Natural killer cell (primary cell): ENCODE measurements at regions of chr1 and their contacts with region 1.

Region 1: GRCh38 chr1:96966536-96967138 is 245.1 kb downstream of the PTBP2 start:
- DNase-seq: peak; percentile 49 to 81
- ATAC-seq: peak; percentile 70 to 82 (median 82)
- H3K4me3 ChIP-seq: no peak overlapping the region
- H3K4me3 Mint-ChIP-seq: no peak overlapping the region
- H3K27ac ChIP-seq: no peak overlapping the region
- H3K27ac Mint-ChIP-seq: no peak overlapping the region
- H3K4me1 ChIP-seq: no peaks in the 10 kb centered on the region
- H3K4me1 Mint-ChIP-seq: no peaks in the 10 kb centered on the region
- H3K27me3 ChIP-seq: peaks cover 3% of the 10 kb centered on the region
- H3K27me3 Mint-ChIP-seq: peaks cover 13 to 14% of the 10 kb centered on the region in 2 donors
- CTCF ChIP-seq: peak; percentile 86

Region 2: DNA sequence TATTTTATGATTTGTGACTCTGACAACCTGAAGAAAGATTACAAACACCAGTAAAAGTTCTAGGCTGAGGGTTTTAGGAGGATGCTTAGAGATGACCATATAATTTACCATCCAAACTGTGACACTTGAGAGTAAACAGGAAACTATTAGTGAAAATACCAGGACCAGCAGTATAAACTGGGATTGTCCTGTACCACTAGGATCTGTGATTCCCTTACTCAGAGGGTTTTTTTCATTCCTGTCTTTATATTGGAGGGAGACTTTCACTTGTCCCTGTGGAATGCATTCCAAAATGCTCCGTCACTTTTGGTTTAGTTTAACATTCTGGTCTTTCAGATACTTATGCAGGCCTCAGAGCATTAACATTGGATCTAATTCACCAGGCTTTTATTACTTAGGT is 237.8 kb after region 1 on chr1:
- intact Hi-C with region 1: no loop called
- DNase-seq: no peak
- ATAC-seq: no peak
- H3K4me3 ChIP-seq: no peak overlapping the region
- H3K4me3 Mint-ChIP-seq: no peak overlapping the region
- H3K27ac ChIP-seq: no peak overlapping the region
- H3K27ac Mint-ChIP-seq: no peak overlapping the region
- H3K4me1 ChIP-seq: no peaks in the 10 kb centered on the region
- H3K4me1 Mint-ChIP-seq: peaks cover 0 to 5% of the 10 kb centered on the region in 2 donors
- H3K27me3 ChIP-seq: no peaks in the 10 kb centered on the region
- H3K27me3 Mint-ChIP-seq: no peaks in the 10 kb centered on the region
- CTCF ChIP-seq: no peak

Region 3: DNA sequence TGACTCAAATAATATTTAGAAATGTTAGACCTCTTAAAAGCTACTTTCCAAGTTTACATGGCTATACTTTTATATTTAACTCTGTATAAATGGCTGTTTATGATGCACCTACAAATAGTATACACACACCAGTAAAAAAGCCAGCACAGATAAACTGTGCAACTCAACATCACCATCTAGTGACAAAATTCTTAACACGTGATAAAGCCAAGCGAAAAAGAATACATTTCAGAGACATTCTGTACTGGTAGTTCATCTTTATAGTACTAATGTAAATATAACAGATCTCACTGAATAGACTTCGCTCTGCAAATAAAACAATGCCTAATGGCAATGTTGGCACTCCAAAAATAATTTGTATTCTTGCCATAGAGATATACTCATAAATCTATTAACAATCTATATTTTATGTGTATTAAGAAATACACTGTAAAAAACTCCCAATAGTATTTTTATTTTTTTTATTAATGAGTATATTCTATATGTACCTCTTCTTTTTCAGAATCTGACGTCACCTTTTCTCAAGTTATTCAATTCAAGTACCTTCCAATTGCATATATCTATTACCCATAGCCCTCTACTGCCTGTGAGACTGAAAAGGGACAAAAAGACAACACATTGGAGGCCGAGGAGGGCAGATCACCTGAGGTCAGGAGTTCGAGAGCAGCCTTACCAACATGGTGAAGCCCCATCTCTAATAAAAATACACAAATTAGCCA is 854.0 kb after region 1 on chr1:
- intact Hi-C with region 1: loop called (anchors 10 kb)
- DNase-seq: peak in 1 of 2 donors; percentile 25
- ATAC-seq: peak in 1 of 3 donors; percentile 43
- H3K4me3 ChIP-seq: no peak overlapping the region
- H3K4me3 Mint-ChIP-seq: no peak overlapping the region
- H3K27ac ChIP-seq: no peak overlapping the region
- H3K27ac Mint-ChIP-seq: no peak overlapping the region
- H3K4me1 ChIP-seq: no peaks in the 10 kb centered on the region
- H3K4me1 Mint-ChIP-seq: peaks cover under 1 to 7% of the 10 kb centered on the region in 2 donors
- H3K27me3 ChIP-seq: no peaks in the 10 kb centered on the region
- H3K27me3 Mint-ChIP-seq: no peaks in the 10 kb centered on the region
- CTCF ChIP-seq: peak; percentile 26